ENCODE measurements at regions of chr6 and their contacts with region 1.

Region 1: GRCh38 chr6:112043032-112044007 is 10.6 kb upstream of the CCN6 start:
- DNase-seq: peak; percentile 87 to 98
- H3K4me3 ChIP-seq: peak overlapping the region; percentile 45 to 78 (median 70)
- H3K27ac ChIP-seq: peak overlapping the region; percentile 16; the same call in 1 of the 2 replicates
- H3K4me1 ChIP-seq: no peaks in the 10 kb centered on the region
- H3K27me3 ChIP-seq: no peaks in the 10 kb centered on the region
- CTCF ChIP-seq: peak; percentile 92 to 96 (median 95)
- EP300 ChIP-seq: peak in 1 of 2 experiments; percentile 58; a peak in 1 of 3 replicates
- POLR2A ChIP-seq: peak; percentile 30 to 82
- RAD21 ChIP-seq: peak; percentile 98 to 99

Region 2: GRCh38 chr6:111677249-111677990 is 365.9 kb before region 1 on chr6:
- CTCF ChIA-PET with region 1: interaction called, 19 read pairs
- POLR2A ChIA-PET with region 1: no interaction called
- DNase-seq: no peak
- H3K4me3 ChIP-seq: no peak overlapping the region
- H3K27ac ChIP-seq: no peak overlapping the region
- H3K4me1 ChIP-seq: peaks cover 0 to 11% (median 7%) of the 10 kb centered on the region in 4 experiments; a peak in 4 of 7 replicates
- H3K27me3 ChIP-seq: no peaks in the 10 kb centered on the region
- CTCF ChIP-seq: no peak
- EP300 ChIP-seq: no peak
- POLR2A ChIP-seq: no peak
- RAD21 ChIP-seq: no peak

Region 3: GRCh38 chr6:111709615-111710398 is 333.5 kb before region 1 on chr6:
- CTCF ChIA-PET with region 1: interaction called, 102 read pairs
- POLR2A ChIA-PET with region 1: interaction called, 4 read pairs
- DNase-seq: no peak
- H3K4me3 ChIP-seq: no peak overlapping the region
- H3K27ac ChIP-seq: no peak overlapping the region
- H3K4me1 ChIP-seq: peaks cover 0 to 6% (median 3%) of the 10 kb centered on the region in 4 experiments; a peak in 5 of 7 replicates
- H3K27me3 ChIP-seq: peaks cover 0 to 1% (median 0%) of the 10 kb centered on the region in 4 experiments; a peak in 1 of 7 replicates
- CTCF ChIP-seq: peak in 2 of 3 experiments; percentile 48 to 66; a peak in 3 of 4 replicates
- EP300 ChIP-seq: no peak
- POLR2A ChIP-seq: no peak
- RAD21 ChIP-seq: peak; percentile 85 to 86

Region 4: DNA sequence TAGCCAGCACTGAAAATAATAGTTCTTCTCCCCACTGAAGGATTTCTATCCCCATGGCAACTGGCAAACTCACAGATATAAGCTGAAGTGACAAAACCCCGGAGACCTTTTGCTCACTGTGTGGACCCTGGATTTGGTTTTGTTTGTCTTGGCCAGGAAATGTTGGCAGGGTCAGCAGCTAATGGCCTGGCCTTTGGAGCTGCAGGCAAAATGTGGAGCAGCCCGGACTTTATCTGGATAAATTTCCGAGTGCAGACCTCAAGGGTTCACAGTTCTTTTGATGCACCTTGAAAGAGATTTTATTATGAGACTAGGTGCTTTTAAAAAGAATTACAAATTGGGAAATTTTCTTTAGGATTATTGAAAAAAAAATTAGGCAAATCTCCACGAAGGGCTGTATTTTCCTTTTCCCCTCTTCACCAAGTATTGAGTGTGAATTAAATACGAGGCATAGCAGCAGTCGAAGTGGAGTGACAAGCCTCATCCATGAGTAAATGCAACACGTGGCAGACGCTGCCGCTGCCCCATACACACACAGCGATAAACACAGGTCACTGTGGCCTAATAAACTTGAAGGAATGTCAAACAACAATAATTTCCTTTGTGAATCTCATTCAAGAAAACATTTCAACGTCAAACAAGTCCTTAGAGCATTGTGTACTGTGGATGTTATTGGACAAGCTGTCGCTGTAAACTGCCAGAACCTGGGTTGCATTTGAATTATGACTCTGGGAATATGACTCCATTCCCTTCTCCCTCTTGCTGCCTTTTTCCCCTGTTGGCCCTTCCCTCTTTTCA is 24.5 kb before region 1 on chr6:
- CTCF ChIA-PET with region 1: interaction called, 13 read pairs
- POLR2A ChIA-PET with region 1: no interaction called
- DNase-seq: no peak
- H3K4me3 ChIP-seq: no peak overlapping the region
- H3K27ac ChIP-seq: no peak overlapping the region
- H3K4me1 ChIP-seq: no peaks in the 10 kb centered on the region
- H3K27me3 ChIP-seq: no peaks in the 10 kb centered on the region
- CTCF ChIP-seq: no peak
- EP300 ChIP-seq: no peak
- POLR2A ChIP-seq: no peak
- RAD21 ChIP-seq: no peak

Region 5: DNA sequence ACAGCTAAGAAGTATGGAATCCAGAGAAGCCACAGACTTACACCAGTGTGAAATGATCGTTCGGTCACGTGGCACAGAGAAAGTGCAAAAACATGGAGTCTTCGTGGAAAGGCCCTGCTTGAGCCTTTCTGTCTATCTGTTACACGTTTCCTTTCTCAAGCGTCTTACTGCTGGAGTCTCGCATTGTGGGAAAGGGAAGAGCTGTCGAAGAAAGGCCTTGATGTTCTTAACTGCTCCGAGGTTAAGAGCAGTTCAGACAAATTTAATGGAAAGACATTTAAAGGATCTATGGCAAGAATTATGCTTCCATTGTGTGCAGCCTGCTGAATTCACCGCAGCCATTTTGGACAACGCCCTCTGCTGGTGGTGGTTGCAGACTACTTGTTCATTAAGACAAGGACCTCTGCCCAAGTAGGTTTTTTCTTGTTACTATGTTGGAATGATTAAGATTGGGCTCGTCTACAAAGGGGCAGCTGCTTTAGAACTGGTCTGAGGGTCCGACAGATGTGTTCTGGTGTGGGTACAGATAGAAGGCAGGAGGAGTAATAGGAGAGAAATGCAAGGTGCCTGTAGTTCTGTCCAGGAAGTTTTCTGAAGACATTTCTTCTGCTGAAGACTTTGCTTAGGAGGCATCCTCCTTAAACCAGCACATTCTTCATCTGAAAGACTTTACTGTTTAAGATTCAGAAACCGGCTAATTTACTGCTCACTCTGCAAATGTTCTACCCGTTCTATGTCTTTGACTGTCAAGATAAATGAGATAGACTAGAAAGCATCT is 14.1 kb before region 1 on chr6:
- CTCF ChIA-PET with region 1: interaction called, 98 read pairs
- POLR2A ChIA-PET with region 1: no interaction called
- DNase-seq: peak; percentile 47 to 86
- H3K4me3 ChIP-seq: no peak overlapping the region
- H3K27ac ChIP-seq: no peak overlapping the region
- H3K4me1 ChIP-seq: no peaks in the 10 kb centered on the region
- H3K27me3 ChIP-seq: no peaks in the 10 kb centered on the region
- CTCF ChIP-seq: peak; percentile 72 to 86 (median 77)
- EP300 ChIP-seq: no peak
- POLR2A ChIP-seq: no peak
- RAD21 ChIP-seq: peak; percentile 61 to 71

Region 6: DNA sequence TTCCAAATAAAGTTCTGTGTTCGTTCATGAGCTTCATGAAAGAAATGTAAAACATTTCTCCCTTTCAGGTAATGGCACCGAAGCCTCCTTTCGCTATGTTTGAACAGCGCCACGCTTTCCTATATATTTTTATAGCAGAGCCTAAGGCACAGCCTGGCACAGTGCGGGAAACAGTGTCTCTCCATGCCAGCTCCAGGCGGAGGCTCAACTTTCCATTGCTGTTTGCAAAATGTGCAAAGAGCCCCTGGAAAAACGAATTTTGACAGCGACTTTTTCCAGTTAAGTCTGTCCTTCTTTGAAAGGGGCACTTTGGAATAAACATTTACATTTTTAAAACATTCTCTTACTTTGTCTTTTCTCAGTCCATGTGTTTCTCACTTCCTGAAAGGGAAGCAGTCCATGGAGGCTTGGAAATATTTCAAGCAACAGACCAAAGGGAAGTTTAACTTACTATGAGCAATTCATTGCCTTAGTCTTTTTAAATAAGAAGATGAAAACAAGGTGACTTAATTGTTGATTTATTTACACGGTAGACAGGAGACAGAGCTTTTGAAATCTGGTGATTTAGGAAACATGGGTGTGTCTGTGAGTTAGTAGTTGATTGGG is 11.3 kb after region 1 on chr6:
- CTCF ChIA-PET with region 1: interaction called, 10 read pairs
- POLR2A ChIA-PET with region 1: no interaction called
- DNase-seq: no peak
- H3K4me3 ChIP-seq: no peak overlapping the region
- H3K27ac ChIP-seq: no peak overlapping the region
- H3K4me1 ChIP-seq: no peaks in the 10 kb centered on the region
- H3K27me3 ChIP-seq: no peaks in the 10 kb centered on the region
- CTCF ChIP-seq: no peak
- EP300 ChIP-seq: no peak
- POLR2A ChIP-seq: no peak
- RAD21 ChIP-seq: no peak